Activated CD8-positive, alpha-beta T cell treated with anti-CD3 and anti-CD28 coated beads for 36 hours (primary cell): ENCODE measurements at regions of chr1 and their contacts with region 1.

Region 1: DNA sequence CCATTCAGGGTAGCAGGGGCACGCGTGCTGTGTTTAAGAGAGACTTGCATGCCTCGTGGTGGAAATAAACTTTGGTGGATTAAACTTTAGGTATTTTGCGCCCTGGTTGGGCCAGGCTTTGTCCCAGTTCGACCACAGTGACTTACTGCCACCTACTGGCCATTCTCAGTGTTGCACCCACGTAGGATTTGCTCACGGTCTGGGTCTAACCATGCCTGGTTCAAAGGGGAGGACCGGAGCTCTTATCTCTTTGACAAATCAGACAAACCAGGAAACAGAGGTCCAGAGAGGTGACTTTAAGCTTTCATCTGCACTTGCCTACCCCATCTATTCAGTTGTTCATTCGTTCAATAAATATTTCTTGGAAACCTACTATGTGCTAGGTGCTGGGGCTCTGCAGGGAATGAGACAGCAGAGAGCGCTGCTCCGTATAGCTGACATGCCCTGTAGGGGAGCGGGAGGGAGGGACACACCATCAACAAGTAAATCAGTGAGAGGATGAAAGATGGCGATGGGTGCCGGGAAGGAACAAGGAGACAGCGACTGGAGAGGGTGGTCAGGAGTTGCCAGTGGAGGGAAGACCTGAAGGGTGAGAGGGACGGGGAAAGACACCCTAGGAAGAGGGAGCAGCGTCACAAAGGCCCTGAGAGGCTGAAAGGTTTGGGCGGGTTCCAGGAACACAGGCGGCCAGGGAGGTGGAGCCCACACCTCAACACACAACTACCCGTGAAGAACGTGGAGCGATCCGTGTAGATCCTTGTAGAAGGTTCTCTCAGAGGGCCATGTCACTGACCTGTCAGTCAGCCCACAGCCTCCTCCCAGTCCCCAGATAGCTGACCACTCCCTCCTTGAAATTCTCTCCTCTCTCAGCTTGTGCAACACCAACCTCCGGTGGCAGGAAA is 27.2 kb upstream of the TINAGL1 start:
- DNase-seq: peak; percentile 94
- ATAC-seq: peak; percentile 97
- H3K4me3 Mint-ChIP-seq: peak overlapping the region; percentile 25
- H3K27ac Mint-ChIP-seq: no peak overlapping the region
- H3K4me1 Mint-ChIP-seq: peaks cover 10% of the 10 kb centered on the region
- H3K27me3 Mint-ChIP-seq: peaks cover 10% of the 10 kb centered on the region
- CTCF ChIP-seq: peak; percentile 92

Region 2: GRCh38 chr1:31166462-31166861 is 382.7 kb before region 1 on chr1:
- CTCF ChIA-PET with region 1: no interaction called
- POLR2A ChIA-PET with region 1: no interaction called
- intact Hi-C with region 1: no loop called
- DNase-seq: no peak
- ATAC-seq: no peak
- H3K4me3 Mint-ChIP-seq: no peak overlapping the region
- H3K27ac Mint-ChIP-seq: no peak overlapping the region
- H3K4me1 Mint-ChIP-seq: peaks cover 11% of the 10 kb centered on the region
- H3K27me3 Mint-ChIP-seq: peaks cover 2% of the 10 kb centered on the region
- CTCF ChIP-seq: no peak

Region 3: GRCh38 chr1:31182352-31182751 is 366.8 kb before region 1 on chr1:
- CTCF ChIA-PET with region 1: interaction called, 7 read pairs
- POLR2A ChIA-PET with region 1: no interaction called
- intact Hi-C with region 1: loop called (anchors 5 kb)
- DNase-seq: peak; percentile 54
- ATAC-seq: peak; percentile 69
- H3K4me3 Mint-ChIP-seq: no peak overlapping the region
- H3K27ac Mint-ChIP-seq: no peak overlapping the region
- H3K4me1 Mint-ChIP-seq: peaks cover 7% of the 10 kb centered on the region
- H3K27me3 Mint-ChIP-seq: peaks cover 30% of the 10 kb centered on the region
- CTCF ChIP-seq: no peak

Region 4: GRCh38 chr1:31422505-31423319 is 126.4 kb before region 1 on chr1:
- CTCF ChIA-PET with region 1: interaction called, 24 read pairs
- POLR2A ChIA-PET with region 1: no interaction called
- intact Hi-C with region 1: no loop called
- DNase-seq: peak; percentile 82
- ATAC-seq: peak; percentile 91
- H3K4me3 Mint-ChIP-seq: no peak overlapping the region
- H3K27ac Mint-ChIP-seq: no peak overlapping the region
- H3K4me1 Mint-ChIP-seq: no peaks in the 10 kb centered on the region
- H3K27me3 Mint-ChIP-seq: peaks cover 13% of the 10 kb centered on the region
- CTCF ChIP-seq: peak; percentile 98

Region 5: DNA sequence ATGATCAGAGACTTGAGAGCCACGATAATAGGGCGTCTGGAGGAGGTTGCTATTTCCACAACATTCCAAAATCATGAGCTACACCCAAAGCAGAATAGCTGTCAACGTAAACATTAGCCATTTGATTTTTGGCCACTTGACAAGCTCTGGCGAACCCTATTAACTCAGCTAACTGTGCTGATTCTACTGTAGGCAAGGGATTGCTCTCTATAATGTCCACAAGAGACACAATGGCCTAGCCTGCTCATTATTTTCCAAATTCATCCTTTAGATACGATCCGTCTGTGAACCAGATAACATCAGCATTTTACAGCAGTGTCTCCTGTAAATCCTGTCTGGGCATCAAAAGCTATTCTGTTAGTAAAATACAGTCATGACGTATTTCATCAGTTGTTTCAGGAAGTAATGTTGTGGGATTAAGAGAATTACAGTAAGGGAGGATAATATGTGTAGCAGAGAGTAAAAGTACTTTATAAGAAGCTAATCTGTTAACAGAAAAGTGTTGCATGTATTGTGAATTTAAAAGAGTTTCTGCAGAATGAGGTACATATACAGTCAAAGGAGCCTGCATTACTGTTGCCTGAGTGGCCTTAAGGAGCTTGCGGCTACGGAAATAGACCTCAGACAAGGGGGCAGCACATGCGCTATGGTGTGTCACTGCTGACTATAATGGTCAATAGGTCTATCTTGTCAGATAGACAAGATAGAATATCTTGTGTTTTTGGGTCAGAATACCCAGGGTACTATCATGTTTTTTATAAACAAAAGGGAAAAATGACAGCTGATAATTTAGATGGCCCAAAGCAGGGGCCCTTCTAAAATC is 17.8 kb before region 1 on chr1:
- CTCF ChIA-PET with region 1: interaction called, 18 read pairs
- POLR2A ChIA-PET with region 1: interaction called, 4 read pairs
- intact Hi-C with region 1: no loop called
- DNase-seq: no peak
- ATAC-seq: no peak
- H3K4me3 Mint-ChIP-seq: no peak overlapping the region
- H3K27ac Mint-ChIP-seq: no peak overlapping the region
- H3K4me1 Mint-ChIP-seq: peaks cover 12% of the 10 kb centered on the region
- H3K27me3 Mint-ChIP-seq: peaks cover 10% of the 10 kb centered on the region
- CTCF ChIP-seq: no peak

Region 6: GRCh38 chr1:31633053-31633452 is 83.9 kb after region 1 on chr1:
- CTCF ChIA-PET with region 1: no interaction called
- POLR2A ChIA-PET with region 1: no interaction called
- intact Hi-C with region 1: no loop called
- DNase-seq: peak; percentile 59
- ATAC-seq: no peak
- H3K4me3 Mint-ChIP-seq: no peak overlapping the region
- H3K27ac Mint-ChIP-seq: no peak overlapping the region
- H3K4me1 Mint-ChIP-seq: peaks cover 9% of the 10 kb centered on the region
- H3K27me3 Mint-ChIP-seq: no peaks in the 10 kb centered on the region
- CTCF ChIP-seq: peak; percentile 27